PC-9 (cell line): ENCODE measurements at regions of chr1 and their contacts with region 1.

Region 1: GRCh38 chr1:37124476-37124875 is 90.2 kb upstream of the GRIK3 start:
- DNase-seq: no peak
- H3K4me3 ChIP-seq: no peak overlapping the region
- H3K27ac ChIP-seq: no peak overlapping the region
- H3K4me1 ChIP-seq: no peaks in the 10 kb centered on the region
- H3K27me3 ChIP-seq: peaks cover 33% of the 10 kb centered on the region
- CTCF ChIP-seq: no peak

Region 2: GRCh38 chr1:36142121-36142520 is 982.4 kb before region 1 on chr1:
- CTCF ChIA-PET with region 1: interaction called, 21 read pairs
- POLR2A ChIA-PET with region 1: no interaction called
- intact Hi-C with region 1: no loop called
- DNase-seq: no peak
- H3K4me3 ChIP-seq: no peak overlapping the region
- H3K27ac ChIP-seq: no peak overlapping the region
- H3K4me1 ChIP-seq: no peaks in the 10 kb centered on the region
- H3K27me3 ChIP-seq: no peaks in the 10 kb centered on the region
- CTCF ChIP-seq: no peak

Region 3: DNA sequence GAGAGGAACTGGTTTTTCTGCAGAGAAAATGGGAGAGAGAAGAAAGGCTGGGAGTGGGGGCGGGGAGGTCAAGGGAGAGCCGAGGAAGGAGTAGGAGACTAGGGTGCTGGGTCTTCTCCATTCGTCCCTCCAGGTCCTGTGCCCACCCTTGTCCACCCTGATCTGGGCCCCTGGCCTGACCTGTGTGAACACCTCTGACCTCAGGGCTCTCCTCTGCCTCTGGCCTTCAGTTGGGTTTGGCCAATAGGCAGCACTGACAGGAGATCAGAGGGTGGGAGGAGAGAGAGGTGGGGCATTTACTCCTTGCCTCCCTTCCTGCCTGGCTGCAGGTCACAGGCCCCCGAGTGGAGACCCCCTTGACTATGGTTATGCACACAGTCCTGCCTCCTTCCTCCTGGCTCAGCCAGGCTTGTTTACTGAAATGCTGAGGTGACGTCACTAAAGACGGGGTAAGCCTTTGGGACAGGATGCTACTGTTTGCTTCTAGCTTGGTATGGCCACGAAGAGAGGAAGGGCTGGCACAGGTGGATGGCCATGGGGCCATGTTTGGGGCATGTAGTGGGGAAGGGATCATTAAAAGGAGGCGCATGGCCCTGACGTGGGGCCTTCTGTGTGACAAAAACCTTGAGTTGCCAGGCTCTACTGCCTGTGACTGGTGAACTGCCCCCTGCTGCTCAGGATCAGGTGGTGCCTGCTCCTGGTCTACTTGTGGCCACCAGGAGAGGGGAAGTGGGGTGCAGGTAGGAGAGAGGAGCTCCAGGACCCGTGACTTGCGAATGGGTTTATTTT is 393.1 kb before region 1 on chr1:
- CTCF ChIA-PET with region 1: no interaction called
- POLR2A ChIA-PET with region 1: no interaction called
- intact Hi-C with region 1: no loop called
- DNase-seq: no peak
- H3K4me3 ChIP-seq: no peak overlapping the region
- H3K27ac ChIP-seq: no peak overlapping the region
- H3K4me1 ChIP-seq: peaks cover 12% of the 10 kb centered on the region
- H3K27me3 ChIP-seq: peaks cover 20% of the 10 kb centered on the region
- CTCF ChIP-seq: no peak